ENCODE measurements at regions of chr6 and their contacts with region 1.

Region 1: DNA sequence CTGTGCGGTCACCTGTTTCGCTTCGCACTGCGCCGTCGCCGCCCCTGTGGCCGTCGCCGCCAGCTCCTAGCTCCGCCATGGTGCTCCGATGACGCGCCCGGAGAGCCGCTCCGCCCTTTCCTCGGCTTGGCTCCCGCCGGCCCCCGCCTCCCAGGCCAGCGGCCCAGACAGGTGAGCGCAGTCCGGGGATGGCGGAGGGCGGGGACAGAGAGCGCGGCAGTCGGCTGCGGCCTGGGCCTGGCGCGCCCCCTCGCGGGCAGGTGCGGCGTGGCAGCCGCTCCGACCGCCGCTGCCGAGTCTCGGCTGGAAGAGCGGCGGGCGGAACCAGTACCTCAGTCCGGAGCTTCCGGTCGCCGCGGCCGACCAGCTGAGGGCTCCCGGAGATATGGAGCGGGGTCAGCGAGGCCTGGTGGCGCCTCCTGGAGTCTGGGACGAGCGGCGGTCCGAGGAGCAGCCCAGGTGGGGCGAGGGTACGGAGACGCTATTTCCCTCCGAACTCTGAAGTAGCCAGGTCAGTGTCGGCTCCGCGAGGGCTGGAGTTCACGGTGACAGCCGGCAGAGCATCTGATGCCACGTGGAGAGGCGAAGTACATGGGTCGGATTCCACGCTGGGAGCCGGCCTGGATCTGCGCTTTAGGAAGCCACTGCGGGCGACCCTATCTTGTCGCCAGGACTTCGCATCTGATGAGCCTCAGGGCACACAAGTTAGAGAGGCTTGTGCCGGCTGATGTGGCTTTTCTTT is at the start of gene MAP7:
- DNase-seq: peak; percentile 91 to 97
- H3K4me3 ChIP-seq: peak within 1 kb of the TSS; percentile 94
- H3K4me3 Mint-ChIP-seq: peak within 1 kb of the TSS; percentile 81
- H3K27ac Mint-ChIP-seq: peak within 1 kb of the TSS; percentile 83
- H3K4me1 ChIP-seq: peaks cover 8% of the 10 kb centered on the region
- H3K4me1 Mint-ChIP-seq: peaks cover 21% of the 10 kb centered on the region
- H3K27me3 ChIP-seq: no peaks in the 10 kb centered on the region
- H3K27me3 Mint-ChIP-seq: no peaks in the 10 kb centered on the region
- CTCF ChIP-seq: peak; percentile 57 to 92
- total RNA-seq, gene MAP7: 55.3 and 57.4 TPM in 2 replicates

Region 2: DNA sequence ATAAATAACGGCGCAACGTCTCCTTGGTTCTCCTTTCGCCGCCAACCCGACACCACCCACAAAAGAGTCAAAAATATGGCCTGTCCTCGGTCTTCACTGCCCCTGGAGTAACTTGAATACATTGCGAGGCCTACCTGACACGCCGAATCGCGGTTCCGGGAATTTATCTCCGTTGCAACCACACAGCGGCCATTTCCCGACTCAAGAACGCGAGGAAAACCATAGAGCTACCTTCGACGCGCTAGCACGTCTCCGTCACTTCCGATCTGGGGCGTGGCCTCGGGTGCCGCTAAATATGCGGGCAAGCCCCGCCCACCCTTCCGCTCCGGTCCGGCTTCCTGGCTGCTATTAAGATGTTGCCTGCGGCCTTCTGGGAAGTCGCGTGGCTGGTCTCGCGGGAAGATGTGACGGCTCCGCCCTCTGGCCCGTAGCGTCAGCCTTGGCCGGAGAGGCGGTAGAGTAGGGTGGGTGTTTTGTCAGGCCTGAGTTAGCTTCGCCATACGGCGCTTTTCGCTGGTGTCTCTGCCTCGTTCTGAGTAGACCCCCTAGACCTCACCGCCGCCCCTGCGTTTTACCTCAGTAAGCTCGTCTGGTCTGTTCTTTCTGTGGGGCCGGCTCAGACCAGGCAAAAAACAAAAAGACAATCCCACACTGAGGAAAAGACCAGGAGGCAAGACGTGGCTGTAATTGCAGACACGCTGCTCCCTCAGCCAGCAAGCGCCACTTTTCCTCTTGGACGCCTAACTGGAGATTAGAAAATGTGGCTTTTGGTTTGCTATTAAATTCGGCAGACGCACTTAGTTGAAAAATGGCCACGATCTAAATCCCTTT is 260.7 kb before region 1 on chr6 and contains the start of gene BCLAF1:
- CTCF ChIA-PET with region 1: interaction called, 6 read pairs
- POLR2A ChIA-PET with region 1: interaction called, 23 read pairs
- intact Hi-C with region 1: loop called (anchors 1 kb)
- DNase-seq: peak; percentile 98 to 99
- H3K4me3 ChIP-seq: peak within 1 kb of the TSS; percentile 75
- H3K4me3 Mint-ChIP-seq: peak within 1 kb of the TSS; percentile 82
- H3K27ac Mint-ChIP-seq: peak within 1 kb of the TSS; percentile 99
- H3K4me1 ChIP-seq: peaks cover 4% of the 10 kb centered on the region; the same call in 1 of the 2 replicates
- H3K4me1 Mint-ChIP-seq: peaks cover 4% of the 10 kb centered on the region
- H3K27me3 ChIP-seq: no peaks in the 10 kb centered on the region
- H3K27me3 Mint-ChIP-seq: no peaks in the 10 kb centered on the region
- CTCF ChIP-seq: no peak
- total RNA-seq, gene BCLAF1: 178 and 182 TPM in 2 replicates

Region 3: DNA sequence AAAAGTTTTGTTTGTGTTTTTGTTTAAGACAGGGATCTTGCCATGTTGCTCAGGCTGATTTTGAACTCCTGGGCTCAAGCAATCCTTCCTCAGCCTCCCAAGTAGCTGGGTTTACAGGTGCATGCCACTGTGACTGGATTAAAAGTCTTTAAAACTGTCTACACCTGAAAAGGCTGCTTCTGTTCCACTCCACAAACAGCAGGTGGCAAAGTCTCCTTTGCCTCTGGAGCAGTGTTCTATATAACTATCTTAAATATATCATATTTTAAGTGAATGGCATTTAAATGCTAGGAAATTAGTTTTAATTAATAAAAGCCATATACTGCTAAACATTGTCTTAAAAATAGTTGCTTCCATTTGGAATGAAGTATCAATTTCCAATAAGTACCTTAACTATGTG is 171.6 kb before region 1 on chr6:
- CTCF ChIA-PET with region 1: interaction called, 16 read pairs
- POLR2A ChIA-PET with region 1: no interaction called
- intact Hi-C with region 1: loop called (anchors 1 kb)
- DNase-seq: no peak
- H3K4me3 ChIP-seq: no peak overlapping the region
- H3K4me3 Mint-ChIP-seq: no peak overlapping the region
- H3K27ac Mint-ChIP-seq: no peak overlapping the region
- H3K4me1 ChIP-seq: no peaks in the 10 kb centered on the region
- H3K4me1 Mint-ChIP-seq: no peaks in the 10 kb centered on the region
- H3K27me3 ChIP-seq: no peaks in the 10 kb centered on the region
- H3K27me3 Mint-ChIP-seq: no peaks in the 10 kb centered on the region
- CTCF ChIP-seq: peak; percentile 22 to 37

Region 4: DNA sequence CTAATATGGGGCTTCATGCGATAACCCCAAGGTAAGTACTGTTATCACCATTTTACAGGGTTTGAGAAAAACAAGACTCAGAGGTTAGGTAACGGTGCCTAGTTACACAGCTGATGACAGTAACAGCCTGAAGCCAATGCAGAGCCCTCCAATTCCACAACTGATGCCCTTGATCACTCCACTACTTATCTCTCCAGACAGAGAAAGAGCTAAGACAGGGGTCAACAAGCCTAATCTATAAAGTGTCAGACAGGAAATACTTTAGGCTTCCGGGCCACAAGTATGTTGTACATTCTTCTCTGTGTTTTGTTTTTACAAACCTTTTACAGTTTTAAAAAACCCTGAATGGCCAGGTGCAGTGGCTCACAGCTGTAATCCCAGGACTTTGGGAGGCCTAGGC is 51.1 kb before region 1 on chr6:
- CTCF ChIA-PET with region 1: no interaction called
- POLR2A ChIA-PET with region 1: no interaction called
- intact Hi-C with region 1: loop called (anchors 2 kb)
- DNase-seq: peak in 1 of 2 experiments; percentile 30
- H3K4me3 ChIP-seq: no peak overlapping the region
- H3K4me3 Mint-ChIP-seq: no peak overlapping the region
- H3K27ac Mint-ChIP-seq: no peak overlapping the region
- H3K4me1 ChIP-seq: peaks cover 10% of the 10 kb centered on the region; the same call in 1 of the 2 replicates
- H3K4me1 Mint-ChIP-seq: peaks cover 9% of the 10 kb centered on the region
- H3K27me3 ChIP-seq: no peaks in the 10 kb centered on the region
- H3K27me3 Mint-ChIP-seq: no peaks in the 10 kb centered on the region
- CTCF ChIP-seq: no peak

Region 5: DNA sequence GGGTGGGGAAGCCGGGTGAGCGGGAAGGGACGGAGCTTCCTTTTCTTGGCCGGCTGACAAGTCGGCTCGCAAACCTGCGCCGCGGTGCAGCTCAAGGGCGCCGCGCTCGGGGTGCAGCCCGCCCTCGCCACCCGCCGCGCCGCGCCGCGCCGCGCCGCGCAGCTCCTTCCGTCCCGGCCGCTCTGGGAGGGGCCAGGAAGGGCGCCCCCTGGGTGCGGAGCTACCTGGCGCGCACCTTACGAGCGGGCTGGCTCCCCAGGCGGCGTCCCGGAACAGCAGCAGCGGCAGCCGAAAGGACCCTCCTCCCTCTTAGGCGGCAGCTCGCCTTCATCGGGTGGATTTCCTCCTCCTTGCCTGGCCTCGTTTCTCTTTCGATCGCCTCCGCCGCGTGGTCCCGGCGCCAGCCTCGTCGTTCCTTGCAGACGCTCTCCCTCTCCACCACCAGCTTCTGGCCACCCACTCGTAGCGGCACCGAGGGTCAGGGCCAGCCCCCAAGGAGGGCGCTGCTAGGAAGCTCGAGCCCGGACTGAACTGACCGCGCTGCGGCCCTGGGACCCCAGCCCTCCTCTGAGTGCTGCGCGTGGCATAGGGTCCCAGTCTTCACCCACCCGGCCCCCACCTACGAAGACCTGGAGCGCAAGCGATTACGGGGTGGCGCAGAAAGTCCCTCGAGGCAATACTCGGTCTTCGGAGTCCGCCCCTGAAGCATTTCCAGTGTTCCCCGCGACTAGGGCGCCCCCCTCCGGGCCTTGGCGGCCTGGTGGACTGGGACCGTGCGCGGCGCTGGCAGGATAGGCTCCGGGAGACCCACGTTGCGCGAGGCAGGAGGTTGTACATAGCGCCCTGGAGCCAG is 242.1 kb after region 1 on chr6 and contains the start of gene MAP3K5:
- CTCF ChIA-PET with region 1: interaction called, 12 read pairs
- POLR2A ChIA-PET with region 1: no interaction called
- intact Hi-C with region 1: loop called (anchors 1 kb)
- DNase-seq: peak; percentile 83 to 94
- H3K4me3 ChIP-seq: peak within 1 kb of the TSS; percentile 60
- H3K4me3 Mint-ChIP-seq: peak within 1 kb of the TSS; percentile 99
- H3K27ac Mint-ChIP-seq: peak within 1 kb of the TSS; percentile 89
- H3K4me1 ChIP-seq: no peaks in the 10 kb centered on the region
- H3K4me1 Mint-ChIP-seq: no peaks in the 10 kb centered on the region
- H3K27me3 ChIP-seq: no peaks in the 10 kb centered on the region
- H3K27me3 Mint-ChIP-seq: no peaks in the 10 kb centered on the region
- CTCF ChIP-seq: peak; percentile 45 to 89
- total RNA-seq, gene MAP3K5: 2.1 and 2.3 TPM in 2 replicates

Measured in Caco-2 (cell line).